PC-9 (cell line): ENCODE measurements at regions of chr2 and their contacts with region 1.

Region 1: GRCh38 chr2:177148477-177149154 is 64.0 kb upstream of the HNRNPA3 start:
- DNase-seq: peak; percentile 76 to 86
- H3K4me3 ChIP-seq: peak overlapping the region; percentile 46
- H3K27ac ChIP-seq: no peak overlapping the region
- H3K4me1 ChIP-seq: peaks cover 8% of the 10 kb centered on the region
- H3K27me3 ChIP-seq: peaks cover 13% of the 10 kb centered on the region
- CTCF ChIP-seq: peak; percentile 97

Region 2: GRCh38 chr2:175366815-175367214 is 1781.8 kb before region 1 on chr2:
- CTCF ChIA-PET with region 1: no interaction called
- POLR2A ChIA-PET with region 1: no interaction called
- intact Hi-C with region 1: loop called (anchors 5 kb)
- DNase-seq: peak in 1 of 2 experiments; percentile 18
- H3K4me3 ChIP-seq: no peak overlapping the region
- H3K27ac ChIP-seq: no peak overlapping the region
- H3K4me1 ChIP-seq: no peaks in the 10 kb centered on the region
- H3K27me3 ChIP-seq: peaks cover 15% of the 10 kb centered on the region
- CTCF ChIP-seq: peak; percentile 89

Region 3: GRCh38 chr2:176126929-176127773 is 1021.5 kb before region 1 on chr2:
- CTCF ChIA-PET with region 1: interaction called, 7 read pairs
- POLR2A ChIA-PET with region 1: no interaction called
- intact Hi-C with region 1: loop called (anchors 1 kb)
- DNase-seq: peak; percentile 43 to 67
- H3K4me3 ChIP-seq: 0 out of 2 replicates have a peak overlapping the region, but pooled peaks have one; percentile 3
- H3K27ac ChIP-seq: no peak overlapping the region
- H3K4me1 ChIP-seq: no peaks in the 10 kb centered on the region
- H3K27me3 ChIP-seq: peaks cover 52% of the 10 kb centered on the region
- CTCF ChIP-seq: peak; percentile 100

Region 4: GRCh38 chr2:176461809-176462382 is 686.7 kb before region 1 on chr2:
- CTCF ChIA-PET with region 1: no interaction called
- POLR2A ChIA-PET with region 1: no interaction called
- intact Hi-C with region 1: no loop called
- DNase-seq: no peak
- H3K4me3 ChIP-seq: no peak overlapping the region
- H3K27ac ChIP-seq: no peak overlapping the region
- H3K4me1 ChIP-seq: no peaks in the 10 kb centered on the region
- H3K27me3 ChIP-seq: no peaks in the 10 kb centered on the region
- CTCF ChIP-seq: no peak

Region 5: DNA sequence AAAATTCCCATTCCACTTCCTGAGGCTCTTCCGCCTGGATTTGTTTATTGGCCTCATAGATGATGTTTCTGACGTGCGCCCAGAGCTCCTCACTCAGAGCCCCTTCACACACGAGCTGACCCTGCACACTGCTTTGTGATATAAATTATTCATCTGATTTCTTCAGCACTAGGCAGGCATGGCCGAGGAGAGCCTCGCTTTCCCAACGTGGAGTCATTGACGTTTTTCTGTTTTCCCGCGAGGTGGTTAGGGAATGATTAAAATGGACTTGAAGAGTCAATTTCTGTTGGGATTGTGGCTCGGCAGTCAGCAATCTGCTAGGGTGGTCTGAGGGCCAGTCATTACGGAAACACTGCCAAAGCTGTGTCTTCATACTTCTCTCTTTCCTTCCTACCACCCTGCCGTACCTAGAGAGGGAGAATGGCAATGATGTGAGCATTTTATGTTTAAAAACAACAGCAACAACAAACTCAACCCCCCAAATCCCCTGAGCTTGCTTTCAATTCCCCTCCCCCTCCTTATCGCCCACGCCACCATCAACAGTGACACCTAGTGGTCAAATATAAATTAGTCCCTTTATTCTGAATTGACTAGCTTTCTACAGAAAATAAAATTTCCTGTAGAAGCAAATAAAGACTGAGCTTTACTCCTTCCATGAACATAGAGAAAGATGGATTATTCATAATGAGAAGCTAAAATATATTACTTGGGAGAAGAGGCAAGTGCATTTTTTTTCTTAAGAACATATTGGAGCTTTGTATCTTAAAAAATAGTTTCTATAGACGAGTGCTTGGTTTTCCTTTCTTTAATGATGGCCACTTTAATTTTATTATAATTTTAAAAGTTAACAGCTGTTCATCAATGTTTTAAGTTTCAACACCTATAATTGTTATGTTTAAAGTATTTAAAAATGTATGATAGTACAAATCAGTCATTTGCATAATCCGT is 594.2 kb before region 1 on chr2:
- CTCF ChIA-PET with region 1: interaction called, 9 read pairs
- POLR2A ChIA-PET with region 1: no interaction called
- intact Hi-C with region 1: loop called (anchors 10 kb)
- DNase-seq: peak; percentile 53 to 54
- H3K4me3 ChIP-seq: peak overlapping the region; percentile 58
- H3K27ac ChIP-seq: no peak overlapping the region
- H3K4me1 ChIP-seq: no peaks in the 10 kb centered on the region
- H3K27me3 ChIP-seq: no peaks in the 10 kb centered on the region; the same call in 1 of the 2 replicates
- CTCF ChIP-seq: peak; percentile 100

Region 6: GRCh38 chr2:176814306-176815052 is 334.1 kb before region 1 on chr2:
- CTCF ChIA-PET with region 1: interaction called, 3 read pairs
- POLR2A ChIA-PET with region 1: no interaction called
- intact Hi-C with region 1: loop called (anchors 2 kb)
- DNase-seq: no peak
- H3K4me3 ChIP-seq: no peak overlapping the region
- H3K27ac ChIP-seq: no peak overlapping the region
- H3K4me1 ChIP-seq: no peaks in the 10 kb centered on the region
- H3K27me3 ChIP-seq: peaks cover 18% of the 10 kb centered on the region
- CTCF ChIP-seq: peak; percentile 87

Region 7: DNA sequence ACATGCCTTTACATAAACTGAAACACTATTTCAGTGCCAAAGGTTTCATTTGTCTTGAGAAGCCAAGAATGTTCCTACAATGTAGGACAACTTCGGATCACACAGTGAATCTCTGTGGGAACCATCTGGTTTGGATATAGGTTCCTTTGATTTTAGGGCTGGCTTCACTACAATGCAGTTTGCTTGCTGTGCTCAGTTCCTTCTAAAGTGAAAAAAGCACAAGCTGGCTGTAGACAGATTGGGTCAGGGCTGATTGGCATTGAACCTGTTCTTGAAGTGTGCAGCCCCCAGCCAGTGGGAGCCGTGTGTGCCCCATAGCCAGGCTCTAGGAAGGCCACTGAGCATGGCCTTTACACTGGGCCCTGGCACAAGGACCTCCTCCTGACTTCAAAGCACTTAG is 103.9 kb before region 1 on chr2:
- CTCF ChIA-PET with region 1: no interaction called
- POLR2A ChIA-PET with region 1: no interaction called
- intact Hi-C with region 1: no loop called
- DNase-seq: no peak
- H3K4me3 ChIP-seq: no peak overlapping the region
- H3K27ac ChIP-seq: no peak overlapping the region
- H3K4me1 ChIP-seq: no peaks in the 10 kb centered on the region
- H3K27me3 ChIP-seq: peaks cover 74% of the 10 kb centered on the region
- CTCF ChIP-seq: no peak

Region 8: DNA sequence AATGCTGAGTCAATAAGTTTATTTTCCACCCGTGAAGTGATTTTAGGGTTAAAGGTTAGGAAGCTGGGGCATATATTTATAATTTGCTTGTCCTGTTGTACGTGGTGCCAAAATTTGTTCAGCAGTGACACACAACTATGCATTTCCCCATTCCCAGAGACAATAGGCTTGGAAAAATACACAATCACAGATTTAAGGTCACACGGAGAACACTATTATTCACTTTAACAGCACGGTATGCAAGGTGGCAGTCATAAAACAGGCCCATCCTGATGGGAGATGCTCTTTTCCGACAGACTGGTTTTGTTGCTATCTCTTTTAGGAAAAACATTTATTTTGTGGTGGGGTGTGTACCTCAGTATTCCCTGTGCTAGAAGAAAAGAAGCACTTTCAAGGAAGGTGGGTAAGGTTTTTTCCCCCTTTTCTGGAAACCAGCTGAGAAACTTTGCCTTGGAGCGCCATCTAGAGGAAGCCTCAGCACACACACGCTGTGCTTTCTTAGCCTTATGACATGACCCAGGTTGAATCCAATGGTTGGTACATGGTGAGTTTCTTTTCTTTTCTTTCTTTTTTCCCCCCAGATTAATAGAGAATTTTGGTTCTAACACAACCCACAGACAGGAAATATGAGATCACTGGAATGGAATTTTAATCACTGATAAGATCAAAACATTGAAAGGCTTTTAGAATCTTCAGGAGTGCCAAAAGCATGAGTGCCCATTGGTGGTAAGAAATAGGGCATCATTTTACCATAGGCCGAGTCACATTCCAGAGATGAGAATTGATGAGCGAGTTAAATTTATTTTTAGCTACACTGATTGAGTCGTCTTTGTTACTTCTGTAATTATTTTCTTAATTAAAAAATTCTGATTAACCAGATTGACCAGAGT is 576.0 kb after region 1 on chr2:
- CTCF ChIA-PET with region 1: no interaction called
- POLR2A ChIA-PET with region 1: no interaction called
- intact Hi-C with region 1: loop called (anchors 5 kb)
- DNase-seq: peak in 1 of 2 experiments; percentile 61
- H3K4me3 ChIP-seq: no peak overlapping the region
- H3K27ac ChIP-seq: no peak overlapping the region
- H3K4me1 ChIP-seq: no peaks in the 10 kb centered on the region
- H3K27me3 ChIP-seq: no peaks in the 10 kb centered on the region
- CTCF ChIP-seq: peak; percentile 99